AG04449 (cell line): ENCODE measurements at regions of chr7 and their contacts with region 1.

Region 1: DNA sequence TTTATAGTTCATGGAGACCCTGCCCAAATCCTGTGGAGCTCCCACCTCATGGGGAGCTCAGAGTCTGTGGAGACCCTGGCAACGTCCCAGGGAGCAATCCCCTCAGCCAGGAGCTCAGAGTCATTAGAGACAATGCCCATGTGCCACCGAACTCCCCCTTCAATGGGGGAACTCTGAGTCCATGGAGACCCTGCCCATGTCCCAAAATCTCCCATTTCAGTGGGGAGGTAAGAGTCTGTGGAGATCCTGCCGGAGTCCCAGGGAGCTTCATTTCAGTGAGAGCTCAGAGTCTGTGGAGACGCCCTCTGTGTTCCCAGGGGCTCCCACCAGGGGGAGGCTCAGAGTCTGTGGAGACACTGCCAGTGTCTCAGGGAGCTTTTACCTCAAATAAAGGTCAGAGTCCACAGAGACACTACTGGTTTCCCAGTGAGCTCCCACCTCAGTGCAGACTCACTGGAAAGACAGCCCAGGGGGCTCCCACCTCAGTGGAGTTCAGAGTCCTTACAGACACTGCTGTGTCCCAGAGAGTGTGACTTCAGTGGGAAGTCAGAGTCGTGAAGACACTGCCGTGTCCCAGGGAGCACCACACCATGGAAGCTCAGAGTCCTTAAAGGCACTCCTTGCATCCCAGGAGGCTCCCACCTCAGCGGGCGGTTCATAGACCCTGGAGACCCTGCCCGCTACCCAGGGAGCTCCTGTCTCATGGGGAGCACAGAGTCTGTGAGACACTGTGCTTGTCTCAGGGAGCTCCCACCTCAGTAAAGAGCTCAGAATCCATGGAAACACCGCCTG is 5.0 kb downstream of the MYO1G start:
- DNase-seq: no peak
- H3K4me3 ChIP-seq: no peak overlapping the region
- CTCF ChIP-seq: peak; percentile 39

Region 2: GRCh38 chr7:44962483-44963251 is 11.1 kb before region 1 on chr7:
- CTCF ChIA-PET with region 1: interaction called, 38 read pairs
- POLR2A ChIA-PET with region 1: no interaction called
- DNase-seq: no peak
- H3K4me3 ChIP-seq: peak overlapping the region; percentile 48
- CTCF ChIP-seq: peak; percentile 15

Region 3: GRCh38 chr7:44986218-44987053 is 12.6 kb after region 1 on chr7:
- CTCF ChIA-PET with region 1: interaction called, 24 read pairs
- POLR2A ChIA-PET with region 1: interaction called, 19 read pairs
- DNase-seq: peak; percentile 59
- H3K4me3 ChIP-seq: peak overlapping the region; percentile 88
- CTCF ChIP-seq: no peak